ENCODE measurements at regions of chr18 and their contacts with region 1.

Region 1: DNA sequence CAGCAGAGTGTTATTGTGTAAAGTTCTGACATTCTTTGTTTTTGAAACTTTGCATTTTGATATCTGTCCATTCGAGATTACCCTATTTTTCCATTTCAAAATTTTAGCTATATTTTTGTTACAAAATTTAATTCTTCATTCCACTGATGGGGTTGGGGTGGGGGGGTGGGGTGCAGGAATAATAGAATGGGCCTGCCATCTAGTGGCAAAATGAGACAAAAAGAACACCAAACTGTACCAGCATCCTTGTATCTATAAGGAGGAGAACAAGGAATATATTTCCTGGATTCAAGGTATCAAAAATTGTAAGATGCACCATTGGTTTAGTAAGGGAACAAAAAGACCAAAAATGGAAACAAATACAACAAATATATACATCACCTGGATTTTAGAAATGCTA is 27.9 kb upstream of the TTR start:
- DNase-seq: no peak
- H3K4me3 ChIP-seq: no peak overlapping the region
- H3K27ac ChIP-seq: no peak overlapping the region
- H3K4me1 ChIP-seq: no peaks in the 10 kb centered on the region
- H3K27me3 ChIP-seq: no peaks in the 10 kb centered on the region
- CTCF ChIP-seq: peak; percentile 15 to 34

Region 2: GRCh38 chr18:31710826-31711225 is 147.0 kb after region 1 on chr18:
- CTCF ChIA-PET with region 1: no interaction called
- dilution Hi-C with region 1: loop called (anchors 25 kb)
- in situ Hi-C with region 1: loop called in 1 of 2 experiments (anchors 10 kb)
- intact Hi-C with region 1: no loop called
- DNase-seq: no peak
- H3K4me3 ChIP-seq: no peak overlapping the region
- H3K27ac ChIP-seq: no peak overlapping the region
- H3K4me1 ChIP-seq: peaks cover 6% of the 10 kb centered on the region
- H3K27me3 ChIP-seq: no peaks in the 10 kb centered on the region
- CTCF ChIP-seq: peak in 1 of 2 donors; percentile 8

Measured in mammary epithelial cell (primary cell).